Activated CD4-positive, alpha-beta T cell treated with anti-CD3 and anti-CD28 coated beads for 36 hours (primary cell): ENCODE measurements at regions of chr15 and their contacts with region 1.

Region 1: GRCh38 chr15:44728576-44729407 is 7.5 kb upstream of the TRIM69 start:
- DNase-seq: peak; percentile 96
- ATAC-seq: peak; percentile 78
- H3K4me3 Mint-ChIP-seq: peak overlapping the region; percentile 91
- H3K27ac Mint-ChIP-seq: peak overlapping the region; percentile 99
- H3K4me1 Mint-ChIP-seq: peaks cover 68% of the 10 kb centered on the region
- H3K27me3 Mint-ChIP-seq: no peaks in the 10 kb centered on the region

Region 2: GRCh38 chr15:44536962-44537734 is 191.6 kb before region 1 on chr15 and contains the start of gene EIF3J:
- CTCF ChIA-PET with region 1: no interaction called
- POLR2A ChIA-PET with region 1: interaction called, 4 read pairs
- intact Hi-C with region 1: loop called in 1 of 2 experiments (anchors 2 kb)
- DNase-seq: peak; percentile 97
- ATAC-seq: peak; percentile 95
- H3K4me3 Mint-ChIP-seq: peak within 1 kb of the TSS; percentile 75
- H3K27ac Mint-ChIP-seq: peak within 1 kb of the TSS; percentile 95
- H3K4me1 Mint-ChIP-seq: peaks cover 45% of the 10 kb centered on the region
- H3K27me3 Mint-ChIP-seq: no peaks in the 10 kb centered on the region
- total RNA-seq, gene EIF3J: 106 to 143 TPM

Region 3: DNA sequence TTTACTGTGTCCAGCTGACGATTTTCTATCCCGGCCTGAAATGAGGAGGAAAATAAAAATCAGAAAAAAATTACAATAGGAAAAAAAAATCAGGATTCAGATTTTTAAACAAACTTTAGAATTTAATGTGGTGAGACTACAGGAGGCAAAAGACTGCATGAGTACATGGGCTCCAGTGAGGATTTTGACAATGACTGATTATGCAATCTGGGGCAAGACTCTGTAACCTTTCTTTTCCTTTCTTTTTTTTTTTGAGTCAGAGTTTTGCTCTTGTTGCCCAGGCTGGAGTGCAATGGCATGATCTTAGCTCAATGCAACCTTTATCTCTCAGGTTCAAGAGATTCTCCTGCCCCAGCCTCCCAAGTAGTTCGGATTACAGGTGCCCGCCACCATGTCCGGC is 95.2 kb before region 1 on chr15:
- CTCF ChIA-PET with region 1: no interaction called
- POLR2A ChIA-PET with region 1: interaction called, 5 read pairs
- intact Hi-C with region 1: loop called in 1 of 2 experiments (anchors 1 kb)
- DNase-seq: peak; percentile 13
- ATAC-seq: peak; percentile 77
- H3K4me3 Mint-ChIP-seq: peak overlapping the region; percentile 65
- H3K27ac Mint-ChIP-seq: peak overlapping the region; percentile 98
- H3K4me1 Mint-ChIP-seq: peaks cover 26% of the 10 kb centered on the region
- H3K27me3 Mint-ChIP-seq: no peaks in the 10 kb centered on the region

Region 4: DNA sequence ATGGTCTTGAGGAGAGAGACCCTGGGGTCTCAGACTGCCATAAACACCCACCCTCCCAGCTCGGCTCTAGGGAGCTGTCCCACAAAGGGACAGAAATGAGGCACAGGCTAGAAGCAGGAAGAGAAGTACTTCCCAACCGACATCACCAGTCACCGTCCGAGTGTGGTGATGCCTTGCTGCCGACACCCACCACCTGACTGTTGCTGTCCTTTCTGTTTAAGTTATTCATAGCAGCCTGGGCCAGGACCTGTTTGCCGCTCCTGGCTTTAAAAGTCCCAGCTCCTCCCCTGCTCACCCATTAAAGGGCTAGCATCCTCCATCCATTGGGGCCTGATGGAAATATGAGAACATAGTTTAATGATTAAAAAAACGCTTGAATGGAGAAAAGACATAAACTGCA is 52.1 kb before region 1 on chr15:
- CTCF ChIA-PET with region 1: interaction called, 3 read pairs
- POLR2A ChIA-PET with region 1: interaction called, 5 read pairs
- intact Hi-C with region 1: loop called in 1 of 2 experiments (anchors 2 kb)
- DNase-seq: peak; percentile 67
- ATAC-seq: peak; percentile 68
- H3K4me3 Mint-ChIP-seq: peak overlapping the region; percentile 41
- H3K27ac Mint-ChIP-seq: peak overlapping the region; percentile 89
- H3K4me1 Mint-ChIP-seq: peaks cover 83% of the 10 kb centered on the region
- H3K27me3 Mint-ChIP-seq: no peaks in the 10 kb centered on the region

Region 5: DNA sequence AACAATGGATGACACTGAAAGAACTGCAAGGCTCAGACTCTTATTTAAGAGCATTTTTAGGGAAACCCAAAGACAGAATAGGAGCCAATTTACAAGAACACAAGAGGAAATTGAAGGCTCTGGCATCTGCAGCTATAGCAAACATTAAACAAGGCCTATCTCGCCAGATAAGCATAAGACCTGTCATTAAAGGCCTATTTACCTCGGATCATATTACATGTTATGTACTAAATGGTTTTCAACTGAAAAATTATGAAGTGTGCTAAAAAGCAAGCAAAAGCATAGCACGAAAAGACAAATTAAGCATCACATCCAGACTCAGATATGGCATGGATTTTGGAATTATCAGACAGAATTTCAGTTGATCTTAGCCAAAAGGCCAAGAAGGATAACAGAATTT is 1523.1 kb after region 1 on chr15:
- CTCF ChIA-PET with region 1: no interaction called
- POLR2A ChIA-PET with region 1: no interaction called
- intact Hi-C with region 1: no loop called
- DNase-seq: no peak
- ATAC-seq: no peak
- H3K4me3 Mint-ChIP-seq: no peak overlapping the region
- H3K27ac Mint-ChIP-seq: no peak overlapping the region
- H3K4me1 Mint-ChIP-seq: no peaks in the 10 kb centered on the region
- H3K27me3 Mint-ChIP-seq: no peaks in the 10 kb centered on the region